Activated CD4-positive, alpha-beta memory T cell treated with anti-CD3 and anti-CD28 coated beads, Interleukin-2, amount 10 ng/mL, durations not matched to agents 7 days and 5 days (primary cell): ENCODE measurements at regions of chr6 and their contacts with region 1.

Region 1: GRCh38 chr6:108565893-108566292 is 5.2 kb downstream of the FOXO3 start:
- DNase-seq: no peak
- H3K4me3 Mint-ChIP-seq: peak overlapping the region; percentile 18
- H3K27ac Mint-ChIP-seq: peak overlapping the region; percentile 73
- H3K4me1 Mint-ChIP-seq: peaks cover 61% of the 10 kb centered on the region
- H3K27me3 Mint-ChIP-seq: peaks cover 5% of the 10 kb centered on the region

Region 2: DNA sequence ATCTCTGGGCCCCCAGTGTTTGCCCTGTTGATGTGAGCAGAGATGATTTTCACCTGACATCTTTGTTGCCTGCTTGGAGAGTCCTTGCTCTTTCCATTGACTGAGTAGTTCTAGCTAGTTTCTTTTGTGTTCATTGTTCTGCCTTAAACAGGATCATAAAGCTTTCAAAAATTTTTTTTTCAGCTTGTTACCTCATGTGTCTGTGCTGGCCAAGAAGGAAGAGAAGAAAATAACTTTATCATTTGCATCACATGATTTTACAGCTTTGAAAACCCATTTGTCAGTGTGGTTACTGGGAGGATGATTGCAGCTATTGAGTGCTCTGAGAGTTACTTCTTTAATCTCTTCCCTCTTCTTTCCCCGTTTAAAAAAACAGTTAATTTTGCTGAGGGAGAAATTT is 10.8 kb after region 1 on chr6:
- CTCF ChIA-PET with region 1: no interaction called
- POLR2A ChIA-PET with region 1: interaction called, 11 read pairs
- DNase-seq: no peak
- H3K4me3 Mint-ChIP-seq: no peak overlapping the region
- H3K27ac Mint-ChIP-seq: no peak overlapping the region
- H3K4me1 Mint-ChIP-seq: peaks cover 39% of the 10 kb centered on the region
- H3K27me3 Mint-ChIP-seq: no peaks in the 10 kb centered on the region